Pancreas (tissue), 10 donors: ENCODE measurements at regions of chr2 and their contacts with region 1.

Region 1: DNA sequence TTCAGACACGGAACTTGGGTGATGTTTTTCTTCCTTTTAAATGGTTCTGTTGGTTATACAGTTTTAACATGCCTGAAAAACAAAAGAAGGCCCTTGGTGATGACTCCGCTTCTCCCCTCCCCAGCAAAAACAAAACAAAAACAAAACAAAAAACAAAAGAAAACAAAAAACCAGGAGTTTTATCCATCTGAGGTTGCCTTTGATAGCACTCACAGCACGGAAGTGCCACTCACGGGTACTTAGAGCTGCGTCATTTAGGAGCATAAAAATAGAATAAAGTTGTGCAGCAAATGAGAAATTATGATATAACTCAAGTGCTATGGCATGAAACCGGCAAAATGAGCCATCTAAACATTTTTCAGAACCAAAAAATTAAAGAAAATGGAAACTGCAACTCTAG is 57.7 kb downstream of the ZEB2 start:
- DNase-seq: no peak
- ATAC-seq: no peak
- H3K4me3 ChIP-seq: no peak overlapping the region
- H3K27ac ChIP-seq: no peak overlapping the region
- H3K4me1 ChIP-seq: no peaks in the 10 kb centered on the region
- H3K27me3 ChIP-seq: peaks cover 0 to 7% (median 0%) of the 10 kb centered on the region in 4 donors
- CTCF ChIP-seq: no peak

Region 2: DNA sequence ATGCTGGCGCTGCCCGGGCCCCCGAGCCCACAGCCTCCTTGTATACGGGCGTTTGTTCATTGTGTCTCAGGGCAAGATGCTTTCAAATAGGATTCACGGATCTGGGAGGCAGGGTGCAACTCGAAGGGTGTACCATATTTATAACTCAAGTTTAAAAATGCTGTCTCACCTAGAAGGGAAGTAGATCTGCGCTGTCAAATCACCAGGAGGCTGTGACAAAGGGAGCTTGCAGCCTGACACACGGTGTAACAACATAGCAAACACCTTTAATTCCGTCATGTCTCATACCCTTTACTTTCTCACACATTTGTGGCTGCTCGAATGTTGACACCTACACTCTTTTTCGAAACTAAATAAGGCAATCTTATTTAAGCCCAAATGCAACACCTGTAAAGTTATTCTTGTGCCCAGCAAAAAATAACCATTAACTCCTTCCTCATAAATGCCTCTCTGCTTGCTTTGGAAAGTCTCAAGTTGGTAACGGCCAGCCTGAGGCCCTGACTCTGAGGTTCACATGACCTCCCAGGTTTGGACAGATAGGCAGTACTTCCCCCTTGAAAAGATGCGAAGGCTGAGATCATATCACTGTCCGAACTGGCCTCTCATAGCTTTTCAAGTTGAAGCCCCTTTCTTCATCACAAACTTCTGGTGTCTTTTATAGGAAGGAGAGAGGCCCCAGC is 46.0 kb after region 1 on chr2:
- intact Hi-C with region 1: loop called in 1 of 3 experiments (anchors 2 kb)
- DNase-seq: no peak
- ATAC-seq: peak in 1 of 4 donors; percentile 19
- H3K4me3 ChIP-seq: no peak overlapping the region
- H3K27ac ChIP-seq: peak overlapping the region in 2 of 4 donors; percentile 42 to 50
- H3K4me1 ChIP-seq: peaks cover 0 to 4% (median 0%) of the 10 kb centered on the region in 3 donors
- H3K27me3 ChIP-seq: peaks cover 0 to 11% (median 0%) of the 10 kb centered on the region in 4 donors
- CTCF ChIP-seq: no peak